ENCODE measurements at regions of chr6 and their contacts with region 1.

Region 1: GRCh38 chr6:143940011-143940597 is 68.0 kb downstream of the PLAGL1 start:
- DNase-seq: peak; percentile 62
- H3K27ac ChIP-seq: no peak overlapping the region
- CTCF ChIP-seq: peak; percentile 34

Region 2: GRCh38 chr6:143901885-143902750 is 38.0 kb before region 1 on chr6:
- CTCF ChIA-PET with region 1: no interaction called
- POLR2A ChIA-PET with region 1: no interaction called
- DNase-seq: no peak
- H3K27ac ChIP-seq: no peak overlapping the region
- CTCF ChIP-seq: no peak

Region 3: GRCh38 chr6:144013486-144013909 is 73.4 kb after region 1 on chr6:
- CTCF ChIA-PET with region 1: interaction called, 14 read pairs
- POLR2A ChIA-PET with region 1: no interaction called
- DNase-seq: peak; percentile 66
- H3K27ac ChIP-seq: no peak overlapping the region
- CTCF ChIP-seq: peak; percentile 91